Panc1 (cell line): ENCODE measurements at regions of chr4 and their contacts with region 1.

Region 1: DNA sequence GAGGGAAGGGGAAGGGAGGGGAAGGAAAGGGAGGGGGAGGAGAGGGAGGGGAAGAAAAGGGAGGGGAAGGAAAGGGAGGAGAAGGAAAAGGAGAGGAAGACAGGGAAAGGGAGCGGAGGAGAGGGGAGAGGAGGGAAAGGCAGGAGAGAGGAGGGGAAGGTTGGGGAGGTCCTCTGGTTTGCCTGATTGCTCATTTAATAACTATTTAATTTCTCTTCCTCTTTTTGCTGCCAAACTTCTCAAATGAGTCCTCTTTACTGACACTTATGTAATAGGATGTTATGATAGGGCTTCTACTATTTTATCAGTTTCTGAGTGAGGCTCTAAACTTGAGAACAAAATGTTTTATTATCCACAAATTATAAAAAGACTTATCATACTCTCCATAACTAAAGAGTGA is 35.4 kb upstream of the PPA2 start:
- DNase-seq: no peak
- ATAC-seq: no peak
- H3K4me3 ChIP-seq: no peak overlapping the region
- H3K27ac ChIP-seq: no peak overlapping the region
- H3K4me1 ChIP-seq: no peaks in the 10 kb centered on the region
- H3K27me3 ChIP-seq: no peaks in the 10 kb centered on the region
- CTCF ChIP-seq: no peak

Region 2: DNA sequence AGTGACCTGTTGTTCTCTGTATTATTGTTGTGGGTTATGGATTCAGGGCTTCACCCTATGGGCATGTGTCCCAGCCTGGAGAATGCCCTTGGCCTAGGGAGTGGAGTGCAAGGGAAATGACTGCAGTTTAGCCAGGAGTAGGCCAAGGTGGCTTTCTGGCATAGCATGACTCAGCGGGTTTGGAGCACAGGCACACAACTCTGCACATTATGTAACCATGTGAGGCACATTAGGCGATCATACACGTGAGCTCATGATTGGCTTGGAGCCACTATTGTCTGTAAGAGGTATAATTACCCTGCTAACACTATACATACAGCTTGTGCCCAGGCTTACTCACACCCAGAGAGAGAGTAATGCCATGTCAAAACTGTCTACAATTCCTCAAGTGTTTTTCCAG is 1754.4 kb before region 1 on chr4:
- CTCF ChIA-PET with region 1: no interaction called
- POLR2A ChIA-PET with region 1: interaction called, 17 read pairs
- in situ Hi-C with region 1: no loop called
- intact Hi-C with region 1: no loop called
- DNase-seq: no peak
- ATAC-seq: no peak
- H3K4me3 ChIP-seq: no peak overlapping the region
- H3K27ac ChIP-seq: no peak overlapping the region
- H3K4me1 ChIP-seq: no peaks in the 10 kb centered on the region
- H3K27me3 ChIP-seq: no peaks in the 10 kb centered on the region
- CTCF ChIP-seq: no peak

Region 3: GRCh38 chr4:105265689-105266088 is 243.6 kb before region 1 on chr4:
- CTCF ChIA-PET with region 1: no interaction called
- POLR2A ChIA-PET with region 1: no interaction called
- in situ Hi-C with region 1: no loop called
- intact Hi-C with region 1: no loop called
- DNase-seq: no peak
- ATAC-seq: no peak
- H3K4me3 ChIP-seq: no peak overlapping the region
- H3K27ac ChIP-seq: no peak overlapping the region
- H3K4me1 ChIP-seq: no peaks in the 10 kb centered on the region
- H3K27me3 ChIP-seq: no peaks in the 10 kb centered on the region
- CTCF ChIP-seq: no peak

Region 4: DNA sequence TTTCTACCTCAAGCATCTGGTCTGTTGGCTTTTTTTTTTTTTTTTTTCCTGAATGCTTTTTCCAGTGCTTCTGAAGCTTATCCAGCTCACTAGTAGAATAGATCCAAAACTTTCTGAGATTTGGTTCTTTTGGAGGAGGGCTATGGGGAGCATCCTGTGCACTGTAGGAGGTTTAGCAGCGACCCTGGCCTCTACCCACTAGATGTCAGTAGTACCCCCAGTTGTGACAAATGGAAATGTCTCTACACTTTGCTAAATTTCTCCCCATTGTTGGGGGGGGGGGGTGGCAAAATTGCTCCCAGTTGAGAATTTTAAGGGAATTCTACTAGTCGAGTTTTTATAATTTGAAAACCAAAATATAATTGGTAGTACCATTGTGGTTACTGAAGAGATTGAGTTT is 12.4 kb before region 1 on chr4:
- CTCF ChIA-PET with region 1: no interaction called
- POLR2A ChIA-PET with region 1: no interaction called
- in situ Hi-C with region 1: no loop called
- intact Hi-C with region 1: no loop called
- DNase-seq: no peak
- ATAC-seq: no peak
- H3K4me3 ChIP-seq: no peak overlapping the region
- H3K27ac ChIP-seq: no peak overlapping the region
- H3K4me1 ChIP-seq: no peaks in the 10 kb centered on the region
- H3K27me3 ChIP-seq: no peaks in the 10 kb centered on the region
- CTCF ChIP-seq: no peak

Region 5: DNA sequence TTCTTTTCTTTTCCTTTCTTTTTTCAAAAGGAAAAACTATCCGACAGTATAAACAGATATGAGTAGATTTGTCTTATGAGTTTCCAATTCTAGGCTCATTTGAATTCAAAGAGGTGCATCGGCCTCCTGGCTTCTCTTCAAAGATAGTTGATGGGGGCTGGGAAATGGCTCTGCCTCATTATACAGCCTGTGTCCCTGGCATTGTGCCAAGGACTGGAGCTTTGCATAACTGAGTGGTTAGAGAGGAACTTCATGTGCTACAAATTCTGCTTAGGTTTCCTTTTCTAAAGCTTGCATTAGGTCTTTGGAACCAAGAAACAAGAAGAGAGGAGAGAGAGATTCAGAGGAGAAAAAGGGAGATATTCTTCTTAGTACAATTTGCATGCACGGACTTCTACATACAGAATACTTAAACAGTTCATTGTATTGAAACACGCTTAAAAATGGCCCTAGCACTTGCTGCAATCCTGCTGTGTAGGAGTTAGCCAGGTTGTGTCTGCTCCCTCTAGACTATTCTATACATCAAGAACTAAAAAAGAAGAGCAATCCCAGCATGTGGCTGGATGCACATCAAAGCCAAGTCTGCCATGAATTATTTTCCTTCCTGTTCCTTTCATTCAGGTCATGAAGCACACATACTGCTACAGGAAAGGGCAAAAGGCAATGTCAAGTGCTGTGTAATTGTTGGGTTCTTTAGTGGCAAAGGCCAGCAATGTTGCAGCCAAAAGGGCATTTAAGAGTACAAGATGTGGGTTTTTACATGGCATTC is 128.3 kb after region 1 on chr4:
- CTCF ChIA-PET with region 1: no interaction called
- POLR2A ChIA-PET with region 1: no interaction called
- in situ Hi-C with region 1: no loop called
- intact Hi-C with region 1: no loop called
- DNase-seq: no peak
- ATAC-seq: no peak
- H3K4me3 ChIP-seq: no peak overlapping the region
- H3K27ac ChIP-seq: no peak overlapping the region
- H3K4me1 ChIP-seq: no peaks in the 10 kb centered on the region
- H3K27me3 ChIP-seq: no peaks in the 10 kb centered on the region
- CTCF ChIP-seq: no peak

Region 6: DNA sequence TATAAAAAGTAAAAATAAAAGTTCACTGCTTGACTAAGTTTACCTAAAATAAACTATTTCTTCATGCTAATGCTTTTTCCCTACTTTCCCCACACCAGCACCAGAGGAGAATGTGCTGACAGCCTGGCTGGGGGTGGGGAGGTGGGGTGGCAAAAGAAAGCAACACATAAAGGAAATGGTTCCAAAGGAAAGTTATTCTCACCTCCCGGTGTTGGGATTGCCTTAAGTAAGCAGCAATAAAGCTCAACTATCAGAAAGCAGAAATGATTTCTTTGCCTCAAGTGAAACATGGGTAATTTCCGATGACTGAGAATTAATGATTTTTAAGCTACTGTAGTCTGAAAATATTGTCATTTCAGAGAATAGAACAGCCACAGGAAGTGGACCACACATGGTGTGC is 1611.4 kb after region 1 on chr4:
- CTCF ChIA-PET with region 1: no interaction called
- POLR2A ChIA-PET with region 1: no interaction called
- in situ Hi-C with region 1: no loop called
- intact Hi-C with region 1: no loop called
- DNase-seq: no peak
- ATAC-seq: no peak
- H3K4me3 ChIP-seq: no peak overlapping the region
- H3K27ac ChIP-seq: no peak overlapping the region
- H3K4me1 ChIP-seq: no peaks in the 10 kb centered on the region
- H3K27me3 ChIP-seq: no peaks in the 10 kb centered on the region
- CTCF ChIP-seq: no peak